Right cardiac atrium (tissue), 5 donors: ENCODE measurements at regions of chr7 and their contacts with region 1.

Region 1: DNA sequence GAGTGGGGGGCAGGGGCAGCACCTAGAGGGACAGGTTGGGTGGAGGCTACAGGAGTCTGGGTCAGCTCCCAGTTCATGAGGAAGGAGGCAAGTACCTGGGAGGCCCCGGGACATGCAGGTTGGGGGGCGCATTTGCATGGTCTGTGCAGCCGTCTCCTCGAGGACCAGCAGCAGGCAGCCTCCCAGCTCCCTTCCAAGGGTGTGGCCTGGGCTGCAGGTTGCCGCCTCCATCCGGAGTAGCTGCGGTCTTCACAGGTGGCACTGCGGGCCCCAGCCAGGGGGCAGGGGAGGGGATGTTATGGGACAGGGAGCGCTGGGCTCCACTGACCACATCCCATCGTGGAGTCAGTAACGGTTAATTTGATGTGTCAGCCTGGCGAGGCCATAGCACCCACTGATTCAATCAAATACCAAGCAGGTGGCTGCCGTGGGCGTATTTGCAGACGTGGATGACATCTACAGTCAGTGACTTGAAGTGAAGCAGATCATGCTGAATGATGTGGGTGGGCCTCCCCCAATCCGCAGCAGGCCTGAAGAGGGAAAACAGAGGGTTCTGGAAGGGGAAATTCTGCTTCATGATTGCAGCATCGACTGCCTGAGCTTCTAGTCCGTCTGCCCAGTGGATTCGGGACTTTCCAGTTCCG is 81.6 kb downstream of the PRKAG2 start:
- DNase-seq: peak in 2 of 3 donors; percentile 37 to 41
- ATAC-seq: no peak
- H3K4me3 ChIP-seq: no peak overlapping the region
- H3K27ac ChIP-seq: no peak overlapping the region
- H3K4me1 ChIP-seq: peaks cover 2% of the 10 kb centered on the region
- H3K27me3 ChIP-seq: no peaks in the 10 kb centered on the region

Region 2: DNA sequence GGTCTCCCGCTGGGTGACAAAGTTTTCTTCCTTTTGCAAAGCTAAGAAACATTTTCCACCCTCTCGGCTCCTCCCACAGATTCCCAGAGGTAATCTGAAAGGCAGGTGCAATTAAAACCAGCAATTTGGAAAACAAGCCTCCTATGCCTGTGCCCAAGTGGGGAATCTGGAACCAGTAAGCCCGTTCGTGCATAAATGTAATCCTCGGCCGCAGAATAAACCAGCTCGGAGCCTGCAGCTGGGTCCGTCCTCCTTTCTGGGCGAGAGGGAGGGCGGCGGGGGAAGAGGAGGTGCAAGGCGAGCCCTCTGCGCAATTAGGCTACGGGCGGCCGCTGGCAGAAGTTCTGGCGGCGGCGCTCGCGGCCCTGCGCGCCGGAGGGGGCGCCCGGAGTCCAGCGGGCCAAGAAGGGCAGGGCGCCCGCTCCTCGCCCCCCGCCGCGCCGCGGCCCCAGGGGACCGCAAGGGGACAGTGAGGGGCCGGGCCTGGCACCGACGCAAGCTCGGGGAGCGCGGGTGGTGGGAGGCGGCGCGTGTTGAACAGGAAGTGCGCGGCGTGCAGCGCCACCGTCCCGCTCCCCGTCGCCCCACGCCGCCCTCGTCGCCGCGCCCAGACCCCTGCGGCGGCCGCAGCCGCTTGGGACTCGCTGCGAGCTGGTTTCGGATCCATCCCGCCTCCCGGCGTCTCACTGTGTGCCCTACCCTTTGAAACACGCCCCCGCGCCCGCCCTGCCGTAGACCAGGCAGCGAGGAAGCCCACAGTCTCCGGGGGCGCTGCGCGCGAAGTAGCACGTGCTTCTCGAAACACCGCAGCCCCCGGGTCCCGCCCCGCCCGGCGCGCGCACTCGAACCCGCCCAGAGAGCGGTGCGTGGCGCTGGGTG is 81.8 kb after region 1 on chr7 and contains the start of gene PRKAG2:
- intact Hi-C with region 1: loop called in 1 of 4 experiments (anchors 10 kb)
- DNase-seq: peak; percentile 72 to 90 (median 90)
- ATAC-seq: peak; percentile 46 to 65
- H3K4me3 ChIP-seq: peak within 1 kb of the TSS; percentile 84
- H3K27ac ChIP-seq: peak within 1 kb of the TSS; percentile 78
- H3K4me1 ChIP-seq: peaks cover 2% of the 10 kb centered on the region
- H3K27me3 ChIP-seq: no peaks in the 10 kb centered on the region
- total RNA-seq, gene PRKAG2: 167 to 298 (median 211) TPM